Esophagus squamous epithelium (tissue), 5 donors: ENCODE measurements at regions of chr6 and their contacts with region 1.

Region 1: GRCh38 chr6:79777713-79778579 is 146.8 kb downstream of the SH3BGRL2 start:
- DNase-seq: no peak
- H3K4me3 ChIP-seq: peak overlapping the region; percentile 14 to 56 (median 28)
- H3K27ac ChIP-seq: no peak overlapping the region
- H3K4me1 ChIP-seq: peaks cover 4 to 10% (median 5%) of the 10 kb centered on the region in 3 donors
- H3K27me3 ChIP-seq: no peaks in the 10 kb centered on the region
- CTCF ChIP-seq: peak; percentile 91 to 99 (median 96)
- POLR2A ChIP-seq: no peak

Region 2: DNA sequence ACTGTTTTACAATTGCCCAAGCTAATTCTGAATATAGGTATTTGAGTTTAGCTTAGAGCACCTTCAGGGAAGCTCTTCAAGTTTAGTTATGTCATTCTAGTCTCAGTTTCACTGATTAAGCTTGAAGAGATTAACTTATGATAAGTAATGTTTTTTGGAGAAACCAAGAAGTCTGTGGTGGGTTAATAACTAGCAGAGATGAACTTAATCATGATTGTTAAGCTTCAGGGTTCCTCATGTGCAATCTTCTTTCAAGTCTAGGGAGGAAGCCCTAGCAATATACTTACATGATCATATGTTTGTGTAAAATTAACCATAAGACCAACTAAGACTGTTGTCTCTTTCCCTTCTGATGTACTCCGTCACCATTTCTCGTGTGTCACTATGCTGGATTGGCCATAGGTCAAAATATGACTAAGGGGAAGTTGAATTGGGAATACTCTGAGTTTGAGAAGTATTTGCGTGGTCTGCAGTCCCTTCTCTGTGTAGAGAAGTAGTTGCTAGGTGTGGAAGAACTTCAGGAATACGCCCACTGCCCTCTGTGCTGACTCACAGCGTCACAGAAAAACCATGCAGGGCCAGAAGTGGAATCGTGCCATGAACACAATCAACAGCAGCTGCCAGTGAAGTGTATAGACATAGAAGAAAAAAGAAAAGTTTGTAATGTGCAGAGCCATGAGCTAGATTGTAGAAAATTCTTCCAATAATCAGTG is 58.5 kb before region 1 on chr6:
- intact Hi-C with region 1: no loop called
- DNase-seq: no peak
- H3K4me3 ChIP-seq: no peak overlapping the region
- H3K27ac ChIP-seq: peak overlapping the region in 1 of 4 donors; percentile 8
- H3K4me1 ChIP-seq: peaks cover 0 to 10% (median 0%) of the 10 kb centered on the region in 3 donors
- H3K27me3 ChIP-seq: no peaks in the 10 kb centered on the region
- CTCF ChIP-seq: no peak
- POLR2A ChIP-seq: no peak

Region 3: DNA sequence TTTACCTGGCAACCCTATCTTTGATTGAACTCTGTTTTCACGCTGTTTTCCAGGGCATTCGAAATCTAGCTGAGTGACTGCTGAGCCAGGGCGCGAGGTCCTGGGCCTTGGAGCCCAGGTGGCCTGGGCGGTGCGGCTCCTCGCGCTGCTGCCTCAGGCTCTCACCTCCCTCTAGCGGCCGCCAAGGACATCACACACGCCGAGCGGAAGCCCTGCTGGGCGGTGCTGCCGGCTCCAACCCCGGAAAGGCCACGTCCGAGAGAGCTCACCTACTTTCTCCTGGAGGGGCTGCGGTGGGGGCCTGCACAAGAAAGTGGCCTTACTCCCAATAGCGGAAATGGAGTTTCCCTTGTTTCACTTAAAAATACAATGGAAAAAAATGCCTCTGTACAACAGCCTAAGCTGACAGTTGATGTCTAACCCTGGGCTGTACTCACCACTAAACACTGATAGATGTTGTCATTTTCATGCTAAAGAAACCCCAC is 91.7 kb after region 1 on chr6:
- intact Hi-C with region 1: loop called (anchors 5 kb)
- DNase-seq: peak; percentile 11
- H3K4me3 ChIP-seq: peak overlapping the region; percentile 2 to 52 (median 24)
- H3K27ac ChIP-seq: peak overlapping the region in 1 of 4 donors; percentile 49
- H3K4me1 ChIP-seq: peaks cover 4 to 24% (median 12%) of the 10 kb centered on the region in 3 donors
- H3K27me3 ChIP-seq: no peaks in the 10 kb centered on the region
- CTCF ChIP-seq: peak; percentile 86 to 96 (median 90)
- POLR2A ChIP-seq: no peak